Panc1 (cell line): ENCODE measurements at regions of chr12 and their contacts with region 1.

Region 1: GRCh38 chr12:31325877-31326631 is at the start of gene SINHCAF:
- DNase-seq: peak; percentile 97
- ATAC-seq: peak; percentile 79
- H3K4me3 ChIP-seq: peak within 1 kb of the TSS; percentile 87 to 93
- H3K27ac ChIP-seq: peak within 1 kb of the TSS; percentile 98
- H3K4me1 ChIP-seq: peaks cover 31% of the 10 kb centered on the region
- H3K27me3 ChIP-seq: peaks cover 13% of the 10 kb centered on the region; the same call in 1 of the 2 replicates
- CTCF ChIP-seq: no peak
- total RNA-seq, gene SINHCAF: 68.8 TPM

Region 2: DNA sequence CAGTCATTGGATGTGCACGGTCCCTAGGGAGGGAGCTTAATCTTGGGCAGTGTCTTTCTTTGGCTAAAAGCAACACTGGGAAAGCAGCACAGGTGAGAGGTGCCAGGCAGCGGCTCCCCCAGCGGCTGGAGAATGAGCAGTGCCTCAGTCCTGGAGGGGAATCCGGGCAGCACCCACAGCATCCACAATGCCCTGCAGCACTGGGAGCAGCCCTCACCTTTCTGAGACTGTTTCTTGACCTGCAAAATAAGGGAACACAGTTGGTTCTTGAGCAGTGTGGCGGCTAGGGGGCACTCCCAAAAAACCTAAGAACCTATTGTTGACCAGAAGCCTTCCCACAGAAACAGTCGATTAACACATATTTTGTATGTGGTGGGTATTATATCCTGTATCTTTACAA is 75.9 kb before region 1 on chr12:
- CTCF ChIA-PET with region 1: no interaction called
- POLR2A ChIA-PET with region 1: no interaction called
- in situ Hi-C with region 1: no loop called
- intact Hi-C with region 1: no loop called
- DNase-seq: no peak
- ATAC-seq: peak; percentile 44; the same call in 1 of the 2 replicates
- H3K4me3 ChIP-seq: no peak overlapping the region
- H3K27ac ChIP-seq: no peak overlapping the region
- H3K4me1 ChIP-seq: no peaks in the 10 kb centered on the region
- H3K27me3 ChIP-seq: peaks cover 15% of the 10 kb centered on the region
- CTCF ChIP-seq: peak; percentile 22; the same call in 1 of the 2 replicates

Region 3: GRCh38 chr12:31578632-31579031 is 252.6 kb after region 1 on chr12:
- CTCF ChIA-PET with region 1: no interaction called
- POLR2A ChIA-PET with region 1: interaction called, 12 read pairs
- in situ Hi-C with region 1: no loop called
- intact Hi-C with region 1: no loop called
- DNase-seq: no peak
- ATAC-seq: no peak
- H3K4me3 ChIP-seq: no peak overlapping the region
- H3K27ac ChIP-seq: no peak overlapping the region
- H3K4me1 ChIP-seq: no peaks in the 10 kb centered on the region; the same call in 1 of the 2 replicates
- H3K27me3 ChIP-seq: no peaks in the 10 kb centered on the region
- CTCF ChIP-seq: no peak

Region 4: DNA sequence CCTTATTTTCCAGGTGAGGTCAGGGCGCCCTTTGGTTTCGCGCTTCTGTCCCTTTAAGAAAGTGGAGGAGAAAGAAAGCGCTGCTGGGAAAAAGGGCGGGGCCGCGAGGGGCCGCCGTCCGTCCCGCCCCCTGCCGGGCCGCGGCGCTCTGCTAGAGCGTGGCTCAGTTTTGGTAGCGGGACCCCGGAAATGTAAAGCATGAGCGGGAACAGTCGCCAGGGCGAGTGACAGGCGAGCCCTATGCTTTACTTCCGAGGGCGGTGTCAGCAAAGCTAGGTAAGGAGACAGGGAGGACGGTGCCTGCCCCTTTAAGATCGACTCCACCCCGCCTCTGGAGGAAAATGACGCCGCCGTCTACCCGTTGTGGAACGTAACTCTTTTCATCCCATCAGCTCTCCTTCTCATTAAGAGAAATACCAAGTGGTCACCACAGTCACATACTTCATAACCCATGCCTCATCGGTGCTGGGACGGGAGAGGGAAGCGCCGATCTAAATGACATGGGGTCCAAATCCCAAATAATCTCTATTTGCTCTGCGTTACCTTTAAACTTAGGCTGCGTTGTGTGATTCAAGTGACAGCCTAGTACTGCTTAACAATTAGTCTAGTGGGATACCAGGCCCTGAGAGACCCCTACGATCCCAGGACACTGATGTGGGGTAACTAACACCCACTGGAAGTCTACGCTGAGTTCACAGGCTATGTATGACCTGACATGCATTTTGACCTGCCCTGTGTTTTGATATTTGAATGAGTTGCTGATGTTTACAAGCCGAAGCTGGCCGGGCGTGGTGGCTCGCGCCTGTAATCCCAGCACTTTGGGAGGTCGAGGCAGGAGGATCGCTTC is 333.3 kb after region 1 on chr12 and contains the start of gene ETFBKMT:
- CTCF ChIA-PET with region 1: no interaction called
- POLR2A ChIA-PET with region 1: interaction called, 11 read pairs
- in situ Hi-C with region 1: no loop called
- intact Hi-C with region 1: no loop called
- DNase-seq: peak; percentile 94
- ATAC-seq: peak; percentile 99
- H3K4me3 ChIP-seq: peak within 1 kb of the TSS; percentile 80 to 83
- H3K27ac ChIP-seq: peak within 1 kb of the TSS; percentile 93
- H3K4me1 ChIP-seq: peaks cover 7% of the 10 kb centered on the region
- H3K27me3 ChIP-seq: no peaks in the 10 kb centered on the region
- CTCF ChIP-seq: peak; percentile 45
- total RNA-seq, gene ETFBKMT: 1.5 TPM

Region 5: GRCh38 chr12:31958569-31959160 is 632.6 kb after region 1 on chr12:
- CTCF ChIA-PET with region 1: interaction called, 11 read pairs
- POLR2A ChIA-PET with region 1: no interaction called
- in situ Hi-C with region 1: no loop called
- intact Hi-C with region 1: no loop called
- DNase-seq: no peak
- ATAC-seq: no peak; the same call in 1 of the 2 replicates
- H3K4me3 ChIP-seq: peak overlapping the region; percentile 78 to 91
- H3K27ac ChIP-seq: peak overlapping the region; percentile 95
- H3K4me1 ChIP-seq: peaks cover 21% of the 10 kb centered on the region
- H3K27me3 ChIP-seq: no peaks in the 10 kb centered on the region
- CTCF ChIP-seq: no peak